ENCODE measurements at regions of chr6 and their contacts with region 1.

Region 1: DNA sequence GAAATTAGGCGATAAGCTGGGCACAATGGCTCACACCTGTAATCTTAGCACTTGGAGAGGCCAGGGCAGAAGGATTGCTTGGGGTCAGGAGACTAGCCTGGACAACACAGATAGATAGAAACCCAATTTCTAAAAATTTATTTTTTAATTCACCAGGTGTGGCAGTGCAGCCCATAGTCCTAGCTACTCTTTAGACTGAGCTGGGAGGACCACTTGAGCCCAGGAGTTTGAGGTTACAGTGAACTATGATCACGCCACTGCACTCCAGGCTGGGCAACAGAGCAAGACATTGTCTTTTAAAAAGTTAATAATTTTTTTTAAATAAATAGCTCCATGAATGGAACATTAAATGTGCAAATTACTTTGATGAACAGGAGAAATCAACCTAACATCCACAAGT is 8.2 kb downstream of the ZNF318 start:
- H3K4me3 ChIP-seq: no peak overlapping the region
- H3K27ac ChIP-seq: no peak overlapping the region
- H3K4me1 ChIP-seq: no peaks in the 10 kb centered on the region
- CTCF ChIP-seq: no peak

Region 2: GRCh38 chr6:43402820-43403219 is 41.6 kb after region 1 on chr6:
- CTCF ChIA-PET with region 1: interaction called, 10 read pairs
- POLR2A ChIA-PET with region 1: no interaction called
- H3K4me3 ChIP-seq: no peak overlapping the region
- H3K27ac ChIP-seq: no peak overlapping the region
- H3K4me1 ChIP-seq: no peaks in the 10 kb centered on the region
- CTCF ChIP-seq: no peak

Region 3: DNA sequence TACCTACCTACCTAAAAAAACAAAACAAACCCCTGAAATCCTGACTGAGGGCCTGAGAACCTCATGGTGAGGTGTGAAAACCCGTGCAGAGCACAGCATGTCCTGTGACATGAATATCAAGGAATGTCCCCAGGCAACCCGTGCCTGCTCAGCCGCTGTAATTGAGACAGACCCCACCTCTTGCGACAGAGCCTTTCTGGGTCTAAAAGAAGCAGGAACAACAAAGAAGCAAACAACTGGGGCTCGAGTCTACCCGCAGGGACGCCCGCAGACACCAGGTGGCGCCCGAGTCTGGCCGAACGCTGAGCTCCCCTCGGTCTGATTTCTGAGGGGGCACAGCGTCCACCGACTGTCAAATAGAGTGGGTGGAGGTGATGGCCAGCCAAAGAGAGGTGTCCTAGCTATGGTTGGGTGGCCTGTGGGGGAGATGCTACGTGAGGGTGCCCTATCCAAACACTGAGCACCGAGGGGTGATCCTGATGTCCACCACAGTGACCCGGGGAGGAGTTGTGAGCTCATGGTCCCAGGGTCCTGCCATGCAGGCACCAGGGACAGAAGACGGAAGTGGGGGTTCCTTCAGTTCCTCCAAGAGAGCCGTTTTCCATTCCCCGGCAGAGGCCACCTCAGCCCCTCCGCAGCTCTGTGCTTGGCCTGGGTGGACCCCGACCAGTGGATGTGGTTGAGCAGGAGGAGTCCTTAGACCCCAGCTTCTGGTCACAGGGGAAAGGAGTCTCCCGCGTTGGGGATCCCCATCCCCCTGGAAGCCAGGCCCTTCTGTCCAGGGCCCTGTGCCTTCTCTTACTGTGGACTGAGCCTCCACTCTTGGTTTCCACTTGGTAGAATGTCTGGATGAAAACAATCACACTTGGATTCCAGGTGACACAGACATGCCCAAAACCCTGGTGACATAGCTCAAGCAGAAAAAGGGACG is 1294.4 kb after region 1 on chr6:
- CTCF ChIA-PET with region 1: no interaction called
- POLR2A ChIA-PET with region 1: no interaction called
- H3K4me3 ChIP-seq: no peak overlapping the region
- H3K27ac ChIP-seq: no peak overlapping the region; the same call in 1 of the 2 replicates
- H3K4me1 ChIP-seq: peaks cover 12% of the 10 kb centered on the region
- CTCF ChIP-seq: peak; percentile 88